Activated CD8-positive, alpha-beta memory T cell treated with anti-CD3 and anti-CD28 coated beads, Interleukin-2, amount 10 ng/mL, durations not matched to agents 7 days and 5 days (primary cell): ENCODE measurements at regions of chr20 and their contacts with region 1.

Region 1: GRCh38 chr20:45971675-45972499 is at the start of gene ZNF335:
- DNase-seq: peak; percentile 95
- ATAC-seq: peak; percentile 82
- H3K4me3 Mint-ChIP-seq: peak within 1 kb of the TSS; percentile 82
- H3K27ac Mint-ChIP-seq: peak within 1 kb of the TSS; percentile 99
- H3K4me1 Mint-ChIP-seq: peaks cover 22% of the 10 kb centered on the region
- H3K27me3 Mint-ChIP-seq: no peaks in the 10 kb centered on the region
- total RNA-seq, gene ZNF335: 39.4 to 40.6 TPM

Region 2: DNA sequence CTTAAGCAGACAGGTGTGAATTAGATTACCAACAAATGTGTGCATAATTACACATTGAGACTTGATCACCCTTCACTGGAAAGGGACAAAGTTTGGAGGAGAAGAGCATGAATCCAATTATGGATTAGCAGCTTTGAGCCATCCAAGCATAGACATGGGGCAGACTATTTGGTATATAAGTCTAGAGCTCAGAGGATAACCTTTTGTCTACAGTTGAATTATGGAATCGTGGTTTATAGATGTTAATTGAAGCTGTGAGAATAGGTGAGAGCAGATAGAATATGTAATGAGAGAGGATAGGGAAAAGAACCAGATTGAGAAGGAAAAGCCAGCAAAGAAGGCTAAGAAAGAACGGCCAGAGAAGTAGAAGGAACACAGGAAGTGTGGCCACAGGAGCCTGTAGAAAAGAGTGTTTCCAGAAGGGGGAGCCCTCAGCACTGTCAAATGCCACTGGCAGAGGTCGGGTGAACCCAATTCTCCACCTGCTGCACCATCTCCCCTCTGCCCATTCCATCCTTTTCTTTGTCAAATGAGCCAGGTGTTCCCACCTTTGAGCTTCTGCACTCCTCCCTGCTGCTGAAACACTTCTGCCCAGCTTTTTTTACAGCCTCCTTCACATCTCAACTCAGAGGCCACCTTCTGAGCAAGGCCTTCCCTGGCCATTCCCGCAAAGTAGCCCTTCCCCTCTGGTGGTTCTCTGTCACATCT is 172.8 kb before region 1 on chr20:
- CTCF ChIA-PET with region 1: interaction called, 32 read pairs
- DNase-seq: peak; percentile 83
- ATAC-seq: peak; percentile 97
- H3K4me3 Mint-ChIP-seq: no peak overlapping the region
- H3K27ac Mint-ChIP-seq: peak overlapping the region; percentile 65
- H3K4me1 Mint-ChIP-seq: peaks cover 23% of the 10 kb centered on the region
- H3K27me3 Mint-ChIP-seq: no peaks in the 10 kb centered on the region

Region 3: DNA sequence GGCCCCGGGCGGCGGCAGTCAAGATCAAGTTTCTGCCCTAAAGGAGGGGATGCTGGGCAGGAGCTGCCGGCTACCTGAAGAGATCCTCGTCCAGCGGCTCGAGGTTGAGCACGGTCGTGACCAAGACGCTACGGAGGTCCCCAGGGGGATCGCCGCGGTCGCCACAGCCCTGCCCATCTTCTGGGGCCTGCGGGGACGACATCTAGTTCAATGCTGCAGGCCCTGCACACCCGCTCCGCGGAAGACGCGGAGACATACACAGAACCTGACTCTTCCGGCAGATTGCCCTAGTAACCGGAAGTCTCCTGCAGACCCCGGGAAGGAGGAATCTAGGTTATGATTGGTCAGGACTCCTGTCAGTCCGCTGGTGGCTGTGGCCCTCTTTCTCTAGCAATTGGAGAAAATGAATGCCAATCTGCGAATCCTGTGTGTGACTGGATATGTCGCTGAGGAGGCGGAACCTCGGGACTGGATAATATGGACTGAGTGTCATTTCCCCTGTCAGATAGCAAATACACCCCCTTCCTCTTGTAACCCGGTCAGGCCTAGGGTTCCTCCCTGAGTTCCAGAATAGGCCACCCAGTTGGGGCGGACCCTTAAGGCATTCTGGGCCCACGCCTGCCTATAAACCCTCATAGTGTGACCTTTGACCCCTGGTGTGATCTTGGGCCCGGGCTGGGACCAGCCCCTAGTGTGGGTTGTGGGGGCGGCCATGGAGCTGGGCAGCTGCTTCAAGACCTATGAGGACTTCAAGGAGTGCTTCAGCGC is 114.6 kb before region 1 on chr20 and contains the starts of genes ACOT8 and ZSWIM3:
- CTCF ChIA-PET with region 1: interaction called, 11 read pairs
- DNase-seq: peak; percentile 98
- ATAC-seq: peak; percentile 97
- H3K4me3 Mint-ChIP-seq: peak within 1 kb of the TSS; percentile 96
- H3K27ac Mint-ChIP-seq: peak within 1 kb of the TSS; percentile 99
- H3K4me1 Mint-ChIP-seq: peaks cover 45% of the 10 kb centered on the region
- H3K27me3 Mint-ChIP-seq: no peaks in the 10 kb centered on the region
- total RNA-seq, gene ACOT8: 36.1 TPM
- total RNA-seq, gene ZSWIM3: 4.5 to 6.5 TPM

Region 4: DNA sequence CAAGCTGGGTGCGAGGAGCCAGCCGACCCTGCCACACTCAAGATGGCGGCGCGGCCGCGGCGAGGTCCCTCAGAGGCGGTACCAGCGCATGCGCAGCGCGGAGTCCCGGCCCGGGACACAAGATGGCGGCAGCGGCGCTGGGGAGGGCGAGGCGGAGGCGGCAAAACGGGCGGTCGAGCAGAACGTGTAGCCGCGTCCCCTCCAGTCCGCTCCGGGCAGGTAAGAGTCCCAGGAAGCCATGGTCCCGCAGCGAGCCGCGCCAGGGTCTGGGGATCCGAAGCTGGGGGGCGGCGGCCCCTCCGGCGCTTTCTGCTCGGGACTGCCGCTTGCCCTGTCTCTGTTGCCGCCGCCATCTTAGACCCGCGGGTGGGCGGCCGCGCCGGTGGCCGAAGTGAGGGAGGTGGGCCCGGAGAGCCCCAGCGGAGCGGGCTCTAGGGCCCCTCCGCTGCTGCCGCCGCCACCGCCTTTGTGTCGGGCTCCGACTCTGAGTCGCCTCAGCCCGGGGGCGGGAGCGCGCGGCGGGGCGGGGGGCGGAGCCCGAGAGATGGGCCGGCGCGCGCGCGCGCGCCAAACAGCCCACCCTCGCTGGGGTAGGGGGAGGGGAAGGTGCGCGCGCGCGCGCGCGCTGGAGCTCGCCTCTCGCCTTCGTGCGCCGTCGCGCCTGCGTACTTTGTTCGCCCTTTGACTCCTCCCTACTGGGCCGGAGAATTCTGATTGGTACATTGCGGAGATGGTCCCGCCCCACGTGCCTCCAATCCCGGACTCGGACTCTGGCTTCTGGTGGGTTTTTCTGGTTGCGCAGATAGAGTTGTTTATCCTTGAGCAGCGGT is 37.1 kb before region 1 on chr20 and contains the start of gene PCIF1:
- CTCF ChIA-PET with region 1: interaction called, 114 read pairs
- DNase-seq: peak; percentile 98
- ATAC-seq: peak; percentile 86
- H3K4me3 Mint-ChIP-seq: peak within 1 kb of the TSS; percentile 96
- H3K27ac Mint-ChIP-seq: peak within 1 kb of the TSS; percentile 98
- H3K4me1 Mint-ChIP-seq: peaks cover 35% of the 10 kb centered on the region
- H3K27me3 Mint-ChIP-seq: no peaks in the 10 kb centered on the region
- total RNA-seq, gene PCIF1: 41.6 to 52.3 TPM

Region 5: DNA sequence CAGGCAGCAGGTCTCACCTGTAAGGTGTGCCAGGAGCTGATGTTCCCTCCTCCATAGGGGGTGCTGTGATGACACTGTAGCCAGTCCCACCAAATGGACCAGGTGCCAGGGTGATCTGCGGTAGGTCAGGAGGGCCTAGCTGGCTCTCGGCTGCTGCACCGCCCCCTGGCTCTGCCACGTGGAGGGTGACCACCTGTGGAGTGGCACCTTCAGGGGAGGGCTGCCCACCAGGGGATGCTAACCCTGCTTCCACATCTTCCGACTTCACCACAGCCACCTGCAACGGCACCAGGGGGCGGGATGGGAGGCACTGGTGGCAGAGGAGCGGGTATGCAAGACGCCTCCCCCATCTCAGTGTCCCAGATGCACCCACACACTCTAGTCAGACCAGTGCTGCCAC is 18.2 kb before region 1 on chr20:
- CTCF ChIA-PET with region 1: interaction called, 53 read pairs
- DNase-seq: no peak
- ATAC-seq: no peak
- H3K4me3 Mint-ChIP-seq: no peak overlapping the region
- H3K27ac Mint-ChIP-seq: no peak overlapping the region
- H3K4me1 Mint-ChIP-seq: no peaks in the 10 kb centered on the region
- H3K27me3 Mint-ChIP-seq: no peaks in the 10 kb centered on the region

Region 6: DNA sequence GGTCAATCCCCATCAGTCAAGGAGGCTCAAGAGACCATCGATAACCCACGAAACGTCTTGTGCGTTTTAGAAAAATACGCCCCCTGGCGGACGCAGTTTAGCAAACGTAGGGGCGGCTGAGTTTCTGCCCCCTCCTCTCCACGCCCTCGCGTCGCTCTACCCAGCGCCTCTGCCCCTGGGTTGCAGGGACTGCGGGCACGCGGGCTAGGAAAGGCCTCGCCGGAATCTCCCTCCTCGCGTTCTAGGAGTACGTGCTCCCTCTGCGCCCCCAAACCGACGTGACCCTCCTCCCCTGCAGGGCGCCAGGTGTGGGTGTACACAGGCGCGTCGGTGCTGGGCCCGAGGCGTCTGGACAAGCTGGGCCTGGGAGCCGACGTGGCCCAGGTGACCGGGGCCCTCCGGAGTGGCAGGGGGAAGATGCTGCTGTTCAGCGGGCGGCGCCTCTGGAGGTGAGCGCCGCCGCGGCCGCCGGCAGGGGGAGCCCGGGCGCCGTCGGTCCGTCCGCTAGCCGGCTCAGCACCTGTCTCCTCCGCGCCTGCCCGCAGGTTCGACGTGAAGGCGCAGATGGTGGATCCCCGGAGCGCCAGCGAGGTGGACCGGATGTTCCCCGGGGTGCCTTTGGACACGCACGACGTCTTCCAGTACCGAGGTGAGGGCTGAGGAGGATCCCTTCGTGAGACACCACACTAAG is 42.1 kb after region 1 on chr20:
- CTCF ChIA-PET with region 1: interaction called, 63 read pairs
- DNase-seq: peak; percentile 73
- ATAC-seq: peak; percentile 92
- H3K4me3 Mint-ChIP-seq: peak overlapping the region; percentile 21
- H3K27ac Mint-ChIP-seq: no peak overlapping the region
- H3K4me1 Mint-ChIP-seq: peaks cover 41% of the 10 kb centered on the region
- H3K27me3 Mint-ChIP-seq: peaks cover 71% of the 10 kb centered on the region

Region 7: GRCh38 chr20:46089417-46090388 is 117.8 kb after region 1 on chr20 and contains the start of gene NCOA5:
- CTCF ChIA-PET with region 1: interaction called, 10 read pairs
- DNase-seq: peak; percentile 97
- ATAC-seq: peak; percentile 93
- H3K4me3 Mint-ChIP-seq: peak within 1 kb of the TSS; percentile 79
- H3K27ac Mint-ChIP-seq: peak within 1 kb of the TSS; percentile 84
- H3K4me1 Mint-ChIP-seq: peaks cover 47% of the 10 kb centered on the region
- H3K27me3 Mint-ChIP-seq: no peaks in the 10 kb centered on the region
- total RNA-seq, gene NCOA5: 24.5 to 36.9 TPM